ENCODE measurements at regions of chr3 and their contacts with region 1.

Region 1: GRCh38 chr3:150324567-150325224 is 83.4 kb upstream of the TSC22D2 start:
- DNase-seq: no peak
- H3K4me3 ChIP-seq: no peak overlapping the region
- H3K27ac ChIP-seq: no peak overlapping the region
- H3K27me3 ChIP-seq: no peaks in the 10 kb centered on the region
- CTCF ChIP-seq: no peak

Region 2: DNA sequence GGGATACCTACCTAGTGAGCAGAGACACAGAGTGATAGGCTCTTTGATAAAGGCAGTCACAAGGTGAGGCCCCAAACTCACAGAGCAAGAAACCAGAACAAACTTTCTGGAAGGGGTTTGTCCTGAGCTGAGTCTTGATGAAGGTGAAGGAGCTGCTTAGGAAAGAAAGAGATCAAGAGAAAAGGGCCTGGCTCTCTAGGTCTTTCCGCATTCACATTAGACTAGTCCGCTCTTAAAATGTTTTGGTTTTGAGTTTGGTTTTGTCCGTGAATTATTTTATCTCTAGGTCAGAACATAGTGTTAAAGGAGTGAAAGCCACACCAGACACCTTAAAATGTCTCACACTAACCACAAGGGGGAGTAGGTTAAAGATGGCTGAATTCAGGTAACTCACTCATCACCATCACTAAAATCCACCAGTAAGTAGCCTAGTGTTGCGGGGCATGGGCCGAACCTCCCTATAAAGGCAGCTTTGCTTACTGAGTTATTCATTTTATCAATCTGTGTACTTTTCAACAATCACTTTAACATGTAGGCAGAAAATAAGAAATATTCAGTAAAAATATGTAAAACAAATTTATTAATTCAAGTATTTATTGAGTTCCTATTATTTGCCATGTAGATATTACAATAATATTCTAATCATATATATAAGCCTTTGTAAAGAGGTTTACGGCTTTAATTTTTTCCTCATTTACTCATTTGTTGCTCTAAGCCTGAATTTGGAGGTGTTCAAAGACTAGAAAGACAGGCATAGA is 38.1 kb before region 1 on chr3:
- CTCF ChIA-PET with region 1: interaction called, 12 read pairs
- POLR2A ChIA-PET with region 1: no interaction called
- DNase-seq: no peak
- H3K4me3 ChIP-seq: no peak overlapping the region
- H3K27ac ChIP-seq: no peak overlapping the region
- H3K27me3 ChIP-seq: no peaks in the 10 kb centered on the region
- CTCF ChIP-seq: peak; percentile 56